Panc1 (cell line): ENCODE measurements at regions of chr1 and their contacts with region 1.

Region 1: DNA sequence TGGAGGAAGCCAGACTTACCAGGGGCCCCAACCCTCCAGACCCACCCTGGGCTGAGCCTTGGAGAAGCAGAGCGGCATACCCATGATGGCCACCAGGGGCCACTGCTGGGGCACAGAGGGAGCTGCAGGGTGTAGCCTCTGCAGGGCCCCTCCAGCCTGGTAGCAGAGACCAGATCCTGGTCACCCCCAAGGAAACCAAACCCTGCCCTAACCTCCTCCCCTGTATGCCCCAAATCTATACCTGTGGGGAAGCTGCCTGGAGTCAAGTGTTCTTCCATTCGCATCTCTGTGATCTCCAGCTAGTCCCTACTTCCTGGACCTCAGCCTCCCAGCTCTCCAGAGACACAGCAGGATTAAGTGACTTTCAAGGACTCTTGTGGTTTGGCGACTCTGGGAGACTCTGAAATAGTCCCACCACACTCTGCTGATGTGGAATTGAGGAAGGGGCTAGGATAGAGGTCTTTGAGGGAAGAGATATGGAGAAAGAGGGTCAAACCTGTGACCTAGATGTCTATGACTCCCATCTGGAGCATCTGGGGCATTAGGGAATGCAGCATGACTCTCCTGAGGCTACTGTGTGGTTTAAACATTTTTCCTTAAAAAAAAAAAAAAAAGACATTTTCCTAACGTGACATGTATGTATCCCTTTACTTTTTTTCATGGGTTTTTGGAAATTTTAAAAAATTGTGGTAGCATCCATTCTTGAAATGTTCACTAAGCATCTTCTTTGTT is 119.2 kb upstream of the IPO9 start:
- DNase-seq: peak; percentile 65
- ATAC-seq: peak; percentile 83
- H3K4me3 ChIP-seq: no peak overlapping the region
- H3K27ac ChIP-seq: peak overlapping the region; percentile 64; the same call in 1 of the 2 replicates
- H3K4me1 ChIP-seq: peaks cover 28% of the 10 kb centered on the region
- H3K27me3 ChIP-seq: no peaks in the 10 kb centered on the region
- CTCF ChIP-seq: peak; percentile 96

Region 2: GRCh38 chr1:201418461-201418860 is 291.3 kb before region 1 on chr1:
- CTCF ChIA-PET with region 1: interaction called, 16 read pairs
- POLR2A ChIA-PET with region 1: no interaction called
- in situ Hi-C with region 1: no loop called
- intact Hi-C with region 1: no loop called
- DNase-seq: no peak
- ATAC-seq: no peak
- H3K4me3 ChIP-seq: no peak overlapping the region
- H3K27ac ChIP-seq: no peak overlapping the region
- H3K4me1 ChIP-seq: no peaks in the 10 kb centered on the region
- H3K27me3 ChIP-seq: peaks cover 4% of the 10 kb centered on the region
- CTCF ChIP-seq: no peak

Region 3: GRCh38 chr1:201643835-201644104 is 66.0 kb before region 1 on chr1:
- CTCF ChIA-PET with region 1: interaction called, 15 read pairs
- POLR2A ChIA-PET with region 1: no interaction called
- in situ Hi-C with region 1: no loop called
- intact Hi-C with region 1: no loop called
- DNase-seq: no peak
- ATAC-seq: no peak
- H3K4me3 ChIP-seq: no peak overlapping the region
- H3K27ac ChIP-seq: no peak overlapping the region
- H3K4me1 ChIP-seq: no peaks in the 10 kb centered on the region
- H3K27me3 ChIP-seq: peaks cover 2% of the 10 kb centered on the region; the same call in 1 of the 2 replicates
- CTCF ChIP-seq: no peak

Region 4: GRCh38 chr1:201660931-201661822 is 48.6 kb before region 1 on chr1:
- CTCF ChIA-PET with region 1: no interaction called
- POLR2A ChIA-PET with region 1: no interaction called
- in situ Hi-C with region 1: no loop called
- intact Hi-C with region 1: no loop called
- DNase-seq: no peak
- ATAC-seq: no peak
- H3K4me3 ChIP-seq: no peak overlapping the region
- H3K27ac ChIP-seq: no peak overlapping the region
- H3K4me1 ChIP-seq: no peaks in the 10 kb centered on the region
- H3K27me3 ChIP-seq: no peaks in the 10 kb centered on the region
- CTCF ChIP-seq: no peak

Region 5: DNA sequence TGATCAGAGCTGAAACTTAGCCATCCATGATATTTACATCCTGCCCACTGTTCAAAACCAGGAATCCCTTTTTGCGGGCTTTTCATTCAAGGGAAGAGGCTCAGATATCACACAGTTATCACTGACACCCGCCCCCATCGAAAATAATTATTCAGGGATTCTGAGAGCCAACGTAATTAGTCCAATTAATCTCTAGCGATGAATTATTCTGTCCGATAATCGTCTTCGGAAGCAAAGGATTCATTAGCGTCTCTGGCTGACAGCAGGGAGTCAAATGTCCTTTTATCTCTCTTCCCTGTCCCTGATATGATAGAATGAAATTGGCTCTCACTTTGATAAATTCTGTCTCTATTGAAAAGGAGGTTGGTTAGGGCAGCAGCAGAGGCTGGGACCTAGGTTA is 21.2 kb before region 1 on chr1:
- CTCF ChIA-PET with region 1: no interaction called
- POLR2A ChIA-PET with region 1: no interaction called
- in situ Hi-C with region 1: no loop called
- intact Hi-C with region 1: no loop called
- DNase-seq: no peak
- ATAC-seq: no peak
- H3K4me3 ChIP-seq: no peak overlapping the region
- H3K27ac ChIP-seq: no peak overlapping the region
- H3K4me1 ChIP-seq: no peaks in the 10 kb centered on the region
- H3K27me3 ChIP-seq: no peaks in the 10 kb centered on the region
- CTCF ChIP-seq: no peak

Region 6: DNA sequence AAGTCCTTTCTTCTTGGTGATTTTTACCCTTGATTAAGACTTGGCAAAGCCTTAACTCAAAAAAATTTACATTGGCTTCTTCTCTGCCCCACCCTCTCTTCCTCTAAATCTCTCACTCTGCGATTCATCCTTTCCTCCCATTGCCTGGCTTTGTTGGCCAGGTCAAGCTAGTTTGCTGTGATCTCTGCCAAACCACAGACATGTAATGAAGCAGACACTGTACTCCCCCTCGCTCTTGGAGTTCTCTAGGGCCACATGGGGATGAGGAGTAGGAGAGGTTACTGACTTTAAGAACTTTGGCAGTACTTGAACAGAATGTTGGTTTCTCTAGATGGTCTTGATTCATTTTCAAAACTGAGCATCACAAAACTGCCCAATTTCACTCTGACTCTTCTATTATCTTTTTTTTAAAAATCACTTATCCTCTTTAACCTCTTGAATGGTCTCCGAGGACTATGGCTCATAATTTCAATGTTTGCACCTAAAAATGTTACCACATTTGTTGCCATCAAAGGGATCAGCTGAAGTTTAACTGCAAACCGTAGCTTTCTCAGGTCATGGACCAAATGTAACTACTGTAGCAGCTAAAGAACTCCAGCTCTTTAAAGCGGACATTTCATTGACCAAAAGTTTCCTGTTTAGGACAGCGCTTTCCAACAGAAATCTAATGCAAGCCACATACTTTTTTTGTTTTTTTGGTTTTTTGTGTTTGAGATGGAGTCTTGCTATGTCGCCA is 56.6 kb after region 1 on chr1:
- CTCF ChIA-PET with region 1: interaction called, 3 read pairs
- POLR2A ChIA-PET with region 1: interaction called, 12 read pairs
- in situ Hi-C with region 1: loop called (anchors 10 kb)
- intact Hi-C with region 1: no loop called
- DNase-seq: no peak
- ATAC-seq: 0 out of 2 replicates have a peak, but pooled peaks have one; percentile 62
- H3K4me3 ChIP-seq: no peak overlapping the region
- H3K27ac ChIP-seq: no peak overlapping the region
- H3K4me1 ChIP-seq: no peaks in the 10 kb centered on the region
- H3K27me3 ChIP-seq: no peaks in the 10 kb centered on the region
- CTCF ChIP-seq: no peak

Region 7: DNA sequence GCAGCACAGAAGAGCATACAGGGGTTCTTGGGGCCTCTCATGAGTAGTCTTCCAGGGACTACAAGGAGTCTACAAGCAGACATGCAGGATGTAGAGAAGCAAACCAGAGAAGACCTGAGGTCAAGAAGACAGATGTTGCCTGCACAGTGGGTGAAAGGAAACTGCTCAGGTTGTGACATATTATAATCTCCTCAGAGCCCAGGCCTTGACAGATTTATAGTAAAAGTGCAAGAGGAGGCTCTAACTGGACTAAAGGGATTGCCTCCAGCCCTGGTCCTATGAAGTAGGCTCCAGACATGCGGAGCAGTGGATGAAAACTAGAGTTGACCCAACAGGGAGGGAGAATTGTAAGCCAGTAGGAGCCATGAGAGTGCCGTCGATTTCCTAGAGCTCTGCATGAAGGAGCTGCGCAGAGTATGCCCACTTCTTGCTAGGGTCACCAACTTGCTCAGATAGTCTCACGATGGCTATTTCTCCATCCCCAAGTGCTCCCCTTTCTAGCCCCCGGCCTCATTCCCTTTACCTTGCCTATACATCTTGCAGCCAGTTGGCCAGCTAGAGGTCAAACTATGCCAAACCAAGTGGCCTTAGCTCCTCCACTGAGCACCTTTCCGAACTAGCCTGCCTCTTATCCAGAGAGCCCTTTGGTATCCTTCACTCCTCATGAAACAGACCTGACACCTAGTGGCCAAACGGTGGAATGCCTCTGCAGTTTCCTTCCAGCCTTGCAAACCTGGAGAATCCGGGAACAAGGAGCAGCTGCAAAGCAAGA is 83.0 kb after region 1 on chr1:
- CTCF ChIA-PET with region 1: interaction called, 45 read pairs
- POLR2A ChIA-PET with region 1: no interaction called
- in situ Hi-C with region 1: no loop called
- intact Hi-C with region 1: loop called (anchors 1 kb)
- DNase-seq: peak; percentile 80
- ATAC-seq: peak; percentile 96
- H3K4me3 ChIP-seq: no peak overlapping the region
- H3K27ac ChIP-seq: no peak overlapping the region
- H3K4me1 ChIP-seq: peaks cover 4% of the 10 kb centered on the region; the same call in 1 of the 2 replicates
- H3K27me3 ChIP-seq: no peaks in the 10 kb centered on the region
- CTCF ChIP-seq: peak; percentile 96